ENCODE measurements at regions of chr4 and their contacts with region 1.

Region 1: GRCh38 chr4:163681208-163681821 is 186.8 kb downstream of the TMA16 start:
- DNase-seq: peak in 7 of 9 donors; percentile 53 to 72 (median 69)
- ATAC-seq: peak; percentile 92
- H3K4me3 ChIP-seq: no peak overlapping the region
- H3K4me3 Mint-ChIP-seq: no peak overlapping the region
- H3K27ac ChIP-seq: no peak overlapping the region
- H3K27ac Mint-ChIP-seq: no peak overlapping the region
- H3K4me1 ChIP-seq: peaks cover 0 to 4% of the 10 kb centered on the region in 2 donors
- H3K4me1 Mint-ChIP-seq: peaks cover 0 to 31% (median 10%) of the 10 kb centered on the region in 7 donors
- H3K27me3 ChIP-seq: no peaks in the 10 kb centered on the region
- H3K27me3 Mint-ChIP-seq: peaks cover 0 to 4% (median 0%) of the 10 kb centered on the region in 5 donors

Region 2: GRCh38 chr4:162265802-162266201 is 1415.5 kb before region 1 on chr4:
- CTCF ChIA-PET with region 1: no interaction called
- POLR2A ChIA-PET with region 1: no interaction called
- intact Hi-C with region 1: no loop called
- DNase-seq: no peak
- ATAC-seq: no peak
- H3K4me3 ChIP-seq: no peak overlapping the region
- H3K4me3 Mint-ChIP-seq: no peak overlapping the region
- H3K27ac ChIP-seq: no peak overlapping the region
- H3K27ac Mint-ChIP-seq: no peak overlapping the region
- H3K4me1 ChIP-seq: no peaks in the 10 kb centered on the region
- H3K4me1 Mint-ChIP-seq: no peaks in the 10 kb centered on the region
- H3K27me3 ChIP-seq: no peaks in the 10 kb centered on the region
- H3K27me3 Mint-ChIP-seq: no peaks in the 10 kb centered on the region

Region 3: GRCh38 chr4:162497564-162498167 is 1183.6 kb before region 1 on chr4:
- CTCF ChIA-PET with region 1: no interaction called
- POLR2A ChIA-PET with region 1: no interaction called
- intact Hi-C with region 1: loop called in 1 of 2 experiments (anchors 2 kb)
- DNase-seq: peak in 6 of 9 donors; percentile 11 to 43 (median 30)
- ATAC-seq: peak; percentile 71
- H3K4me3 ChIP-seq: no peak overlapping the region
- H3K4me3 Mint-ChIP-seq: no peak overlapping the region
- H3K27ac ChIP-seq: no peak overlapping the region
- H3K27ac Mint-ChIP-seq: no peak overlapping the region
- H3K4me1 ChIP-seq: no peaks in the 10 kb centered on the region
- H3K4me1 Mint-ChIP-seq: no peaks in the 10 kb centered on the region
- H3K27me3 ChIP-seq: no peaks in the 10 kb centered on the region
- H3K27me3 Mint-ChIP-seq: peaks cover 0 to 11% (median 0%) of the 10 kb centered on the region in 5 donors

Region 4: DNA sequence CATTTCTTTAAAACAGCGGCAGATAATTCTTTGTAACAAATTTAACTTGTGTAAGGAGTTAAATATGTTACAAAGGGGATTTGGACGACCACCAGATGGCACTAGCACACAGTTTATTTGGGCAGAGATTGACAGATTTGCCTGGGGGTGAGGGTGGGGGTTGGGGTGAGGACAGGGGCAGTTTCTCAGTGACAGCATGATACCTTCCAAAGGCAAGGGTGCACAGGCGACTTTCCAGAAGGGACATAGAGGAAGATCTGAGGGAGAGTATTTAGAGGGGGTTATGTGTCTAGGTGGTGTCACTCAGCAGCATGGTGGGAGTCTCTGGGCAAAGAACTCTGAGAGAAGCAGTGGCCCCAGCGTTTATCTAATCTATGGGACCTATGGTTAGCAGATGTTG is 196.4 kb before region 1 on chr4:
- CTCF ChIA-PET with region 1: no interaction called
- POLR2A ChIA-PET with region 1: no interaction called
- intact Hi-C with region 1: loop called (anchors 1 to 2 kb)
- DNase-seq: peak in 8 of 9 donors; percentile 14 to 50 (median 36)
- ATAC-seq: peak; percentile 74
- H3K4me3 ChIP-seq: no peak overlapping the region
- H3K4me3 Mint-ChIP-seq: no peak overlapping the region
- H3K27ac ChIP-seq: no peak overlapping the region
- H3K27ac Mint-ChIP-seq: no peak overlapping the region
- H3K4me1 ChIP-seq: no peaks in the 10 kb centered on the region
- H3K4me1 Mint-ChIP-seq: peaks cover 0 to 6% (median 0%) of the 10 kb centered on the region in 7 donors
- H3K27me3 ChIP-seq: no peaks in the 10 kb centered on the region
- H3K27me3 Mint-ChIP-seq: peaks cover 4 to 21% (median 10%) of the 10 kb centered on the region in 5 donors

Region 5: DNA sequence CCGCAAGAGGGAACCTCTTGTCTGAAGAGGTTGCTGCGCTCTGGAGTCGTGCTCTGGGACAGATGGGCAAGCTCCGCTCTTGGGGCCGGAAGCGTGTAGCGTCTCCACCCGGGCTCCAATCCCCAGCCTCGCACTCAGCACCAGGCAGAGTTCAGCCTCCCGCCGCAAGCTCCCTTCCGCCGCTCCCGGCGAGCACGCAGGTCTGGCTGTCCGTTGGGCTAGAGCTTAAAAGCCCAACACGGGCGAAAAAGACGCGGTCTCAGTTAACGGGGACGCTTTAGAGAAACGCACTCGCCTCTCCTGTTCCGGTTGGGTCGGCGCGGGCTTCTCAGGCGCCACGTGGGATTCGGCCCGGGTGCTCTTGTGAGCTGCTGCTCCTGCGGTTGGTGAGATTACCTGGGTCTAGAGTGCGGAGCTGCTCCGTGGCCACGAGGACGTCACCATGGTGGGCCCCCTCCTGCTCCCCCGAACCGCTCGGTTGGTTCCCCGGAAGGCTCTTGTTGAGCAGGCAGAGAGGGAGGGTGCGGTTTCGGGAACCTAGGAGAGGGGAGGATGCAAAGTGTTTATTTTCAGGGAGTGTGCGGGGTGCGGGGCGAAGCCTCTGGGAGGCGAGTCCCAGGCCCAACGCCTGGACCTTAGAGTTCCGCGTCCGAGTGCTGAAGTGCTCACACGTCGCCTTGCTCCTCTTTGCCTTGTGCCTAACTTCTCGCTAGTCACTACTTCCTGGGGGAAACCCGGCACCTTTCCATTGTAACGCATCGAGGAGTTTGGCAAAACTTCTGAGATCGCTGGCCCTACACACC is 186.8 kb before region 1 on chr4 and contains the start of gene TMA16:
- CTCF ChIA-PET with region 1: interaction called, 5 read pairs
- POLR2A ChIA-PET with region 1: no interaction called
- intact Hi-C with region 1: loop called in 1 of 2 experiments (anchors 2 kb)
- DNase-seq: peak; percentile 56 to 87 (median 76)
- ATAC-seq: peak; percentile 89
- H3K4me3 ChIP-seq: peak within 1 kb of the TSS; percentile 94
- H3K4me3 Mint-ChIP-seq: peak within 1 kb of the TSS; percentile 92 to 100 (median 98)
- H3K27ac ChIP-seq: peak within 1 kb of the TSS; percentile 83
- H3K27ac Mint-ChIP-seq: peak within 1 kb of the TSS; percentile 78 to 99 (median 96)
- H3K4me1 ChIP-seq: peaks cover 7% of the 10 kb centered on the region in 2 donors
- H3K4me1 Mint-ChIP-seq: peaks cover 20 to 44% (median 36%) of the 10 kb centered on the region in 7 donors
- H3K27me3 ChIP-seq: no peaks in the 10 kb centered on the region
- H3K27me3 Mint-ChIP-seq: peaks cover 0 to 12% (median 5%) of the 10 kb centered on the region in 5 donors
- total RNA-seq, gene TMA16: 10.5 to 38.7 (median 20.7) TPM

Region 6: GRCh38 chr4:164731827-164732474 is 1050.6 kb after region 1 on chr4:
- CTCF ChIA-PET with region 1: no interaction called
- POLR2A ChIA-PET with region 1: no interaction called
- intact Hi-C with region 1: loop called in 1 of 2 experiments (anchors 5 kb)
- DNase-seq: peak; percentile 10 to 46 (median 39)
- ATAC-seq: peak; percentile 58
- H3K4me3 ChIP-seq: no peak overlapping the region
- H3K4me3 Mint-ChIP-seq: no peak overlapping the region
- H3K27ac ChIP-seq: no peak overlapping the region
- H3K27ac Mint-ChIP-seq: no peak overlapping the region
- H3K4me1 ChIP-seq: no peaks in the 10 kb centered on the region
- H3K4me1 Mint-ChIP-seq: peaks cover 0 to 4% (median 0%) of the 10 kb centered on the region in 7 donors
- H3K27me3 ChIP-seq: no peaks in the 10 kb centered on the region
- H3K27me3 Mint-ChIP-seq: peaks cover 10 to 16% (median 15%) of the 10 kb centered on the region in 5 donors

Measured in naive thymus-derived CD4-positive, alpha-beta T cell (primary cell).